Activated CD8-positive, alpha-beta memory T cell treated with anti-CD3 and anti-CD28 coated beads, Interleukin-2, amount 10 ng/mL, durations not matched to agents 7 days and 5 days (primary cell): ENCODE measurements at regions of chr6 and their contacts with region 1.

Region 1: DNA sequence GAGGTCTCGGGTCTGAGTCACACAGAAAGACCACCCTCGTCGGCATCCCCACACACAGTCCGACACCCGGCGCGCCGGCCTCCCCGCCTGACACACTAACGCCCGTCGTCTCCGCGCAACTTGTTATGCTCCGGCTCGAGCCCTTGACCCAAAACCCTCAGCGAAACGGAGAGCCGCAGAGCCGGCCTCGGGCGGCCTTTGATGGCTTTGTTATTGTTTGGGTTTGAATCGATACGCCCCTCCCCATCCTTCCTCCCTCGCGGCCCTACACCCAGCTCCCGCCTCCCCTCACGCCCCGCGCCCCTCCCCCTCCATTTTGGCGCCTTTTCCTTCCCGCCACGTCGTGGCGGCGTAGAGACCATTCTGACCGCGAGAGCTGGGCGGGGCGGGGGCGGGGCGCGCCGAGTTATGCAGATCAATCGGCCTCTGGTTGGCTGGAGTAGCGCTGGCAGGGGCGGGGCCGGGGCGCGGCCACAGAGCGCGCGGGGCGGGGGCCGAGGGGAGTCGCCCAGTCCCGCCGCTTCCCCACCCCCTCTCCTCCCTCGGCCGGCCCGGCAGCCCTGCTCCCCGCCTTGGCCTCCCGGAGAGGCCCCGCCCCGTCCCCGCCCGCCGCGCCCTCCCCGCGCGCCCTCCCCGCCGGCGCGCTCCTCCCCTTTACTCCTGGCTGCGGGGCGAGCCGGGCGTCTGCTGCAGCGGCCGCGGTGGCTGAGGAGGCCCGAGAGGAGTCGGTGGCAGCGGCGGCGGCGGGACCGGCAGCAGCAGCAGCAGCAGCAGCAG is at the start of gene PIM1:
- DNase-seq: peak; percentile 100
- ATAC-seq: peak; percentile 85
- H3K4me3 Mint-ChIP-seq: peak within 1 kb of the TSS; percentile 93
- H3K27ac Mint-ChIP-seq: peak within 1 kb of the TSS; percentile 96
- H3K4me1 Mint-ChIP-seq: peaks cover 30% of the 10 kb centered on the region
- H3K27me3 Mint-ChIP-seq: no peaks in the 10 kb centered on the region
- total RNA-seq, gene PIM1: 361 to 464 TPM

Region 2: GRCh38 chr6:37182736-37183590 is 13.3 kb after region 1 on chr6:
- CTCF ChIA-PET with region 1: interaction called, 50 read pairs
- DNase-seq: peak; percentile 91
- ATAC-seq: peak; percentile 95
- H3K4me3 Mint-ChIP-seq: peak overlapping the region; percentile 50
- H3K27ac Mint-ChIP-seq: peak overlapping the region; percentile 98
- H3K4me1 Mint-ChIP-seq: peaks cover 73% of the 10 kb centered on the region
- H3K27me3 Mint-ChIP-seq: no peaks in the 10 kb centered on the region

Region 3: DNA sequence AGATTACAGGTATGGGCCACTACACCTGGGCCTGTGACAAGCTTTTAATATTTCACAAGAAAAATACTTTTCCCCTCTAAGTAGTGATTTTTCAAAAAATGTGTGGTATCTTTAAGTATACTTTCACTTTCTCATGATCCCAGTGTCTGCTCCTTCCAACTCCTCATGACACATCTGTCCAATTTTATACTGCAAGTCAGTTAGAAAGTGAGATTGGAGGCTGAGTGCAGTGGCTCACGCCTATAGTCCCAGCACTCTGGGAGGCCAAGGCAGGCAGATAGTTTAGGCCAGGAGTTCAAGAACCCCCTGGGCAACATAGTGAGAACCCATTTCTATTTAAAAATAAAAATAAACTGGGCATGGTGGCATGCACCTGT is 20.5 kb after region 1 on chr6:
- CTCF ChIA-PET with region 1: interaction called, 50 read pairs
- DNase-seq: no peak
- ATAC-seq: peak; percentile 31
- H3K4me3 Mint-ChIP-seq: no peak overlapping the region
- H3K27ac Mint-ChIP-seq: peak overlapping the region; percentile 81
- H3K4me1 Mint-ChIP-seq: peaks cover 73% of the 10 kb centered on the region
- H3K27me3 Mint-ChIP-seq: no peaks in the 10 kb centered on the region

Region 4: DNA sequence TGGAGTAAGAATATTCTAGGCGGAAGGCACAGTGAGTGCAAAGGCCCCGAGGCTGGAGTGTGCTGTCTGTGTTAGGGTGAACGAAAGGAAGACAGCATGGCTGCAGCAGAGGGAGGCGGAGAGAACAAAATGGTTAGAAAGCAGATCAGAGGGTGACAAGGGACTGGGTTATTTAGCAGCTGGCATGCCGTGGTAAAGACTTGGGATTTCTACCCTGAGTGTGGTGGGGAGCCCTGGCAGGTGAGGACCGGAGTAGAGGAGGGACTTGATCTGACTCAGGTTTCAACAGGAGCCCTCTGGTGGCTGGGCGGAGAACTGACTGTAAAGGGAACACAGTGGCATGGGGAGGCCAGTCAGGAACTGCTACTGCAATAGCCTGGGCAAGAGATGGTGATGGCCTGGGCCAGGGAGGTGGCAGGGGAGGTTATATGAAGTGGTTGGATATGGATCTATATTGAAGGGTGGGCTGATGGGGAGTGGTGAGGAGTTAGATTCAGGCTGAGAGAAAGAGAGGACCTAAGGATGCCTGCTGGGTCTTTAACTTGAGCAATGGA is 38.3 kb after region 1 on chr6:
- CTCF ChIA-PET with region 1: interaction called, 314 read pairs
- DNase-seq: peak; percentile 97
- ATAC-seq: peak; percentile 85
- H3K4me3 Mint-ChIP-seq: peak overlapping the region; percentile 3
- H3K27ac Mint-ChIP-seq: peak overlapping the region; percentile 88
- H3K4me1 Mint-ChIP-seq: peaks cover 65% of the 10 kb centered on the region
- H3K27me3 Mint-ChIP-seq: no peaks in the 10 kb centered on the region

Region 5: DNA sequence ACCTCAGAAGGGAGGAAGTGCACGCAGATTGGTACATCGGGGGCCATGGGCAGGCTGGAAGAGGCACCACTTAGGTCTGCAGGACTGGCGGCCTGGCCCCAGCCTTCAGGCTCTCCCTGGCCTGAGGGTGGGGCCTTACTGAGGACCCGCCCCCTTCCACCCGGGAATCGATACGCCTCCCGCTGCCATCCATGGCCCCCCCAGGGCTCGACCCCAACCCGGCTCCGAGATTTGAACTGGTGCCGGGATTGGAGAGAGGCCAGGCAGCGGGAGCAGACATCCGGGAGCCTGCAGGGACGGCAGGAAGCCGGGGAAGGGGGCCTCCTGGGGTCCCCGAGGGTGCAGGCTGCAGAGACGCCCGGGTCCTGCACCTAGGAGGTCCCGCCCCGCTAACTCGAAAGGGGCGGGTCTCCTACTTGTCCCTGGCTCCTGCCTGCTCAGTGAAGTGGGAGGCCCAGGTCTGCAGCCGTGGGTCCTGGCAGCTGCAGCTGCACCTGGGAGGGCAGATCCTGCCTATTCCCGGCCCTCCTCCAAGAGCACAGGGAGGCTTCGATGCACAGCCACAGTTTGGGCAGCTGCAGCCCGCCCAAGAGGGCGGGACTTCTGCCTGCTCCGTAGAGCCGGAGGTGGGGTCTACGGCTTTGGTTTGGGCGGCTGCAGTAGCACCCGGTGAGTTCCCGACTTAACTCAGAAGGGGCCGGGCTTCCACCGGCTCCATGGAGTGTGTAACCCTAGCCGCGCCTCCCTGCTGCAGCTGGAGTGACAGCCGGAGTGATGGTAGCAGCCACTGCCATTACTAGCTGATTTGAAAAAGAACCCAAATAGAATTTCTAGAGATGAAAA is 52.7 kb after region 1 on chr6:
- CTCF ChIA-PET with region 1: interaction called, 12 read pairs
- DNase-seq: peak; percentile 89
- ATAC-seq: peak; percentile 95
- H3K4me3 Mint-ChIP-seq: peak overlapping the region; percentile 79
- H3K27ac Mint-ChIP-seq: peak overlapping the region; percentile 71
- H3K4me1 Mint-ChIP-seq: peaks cover 24% of the 10 kb centered on the region
- H3K27me3 Mint-ChIP-seq: no peaks in the 10 kb centered on the region